Caco-2 (cell line): ENCODE measurements at regions of chr3 and their contacts with region 1.

Region 1: DNA sequence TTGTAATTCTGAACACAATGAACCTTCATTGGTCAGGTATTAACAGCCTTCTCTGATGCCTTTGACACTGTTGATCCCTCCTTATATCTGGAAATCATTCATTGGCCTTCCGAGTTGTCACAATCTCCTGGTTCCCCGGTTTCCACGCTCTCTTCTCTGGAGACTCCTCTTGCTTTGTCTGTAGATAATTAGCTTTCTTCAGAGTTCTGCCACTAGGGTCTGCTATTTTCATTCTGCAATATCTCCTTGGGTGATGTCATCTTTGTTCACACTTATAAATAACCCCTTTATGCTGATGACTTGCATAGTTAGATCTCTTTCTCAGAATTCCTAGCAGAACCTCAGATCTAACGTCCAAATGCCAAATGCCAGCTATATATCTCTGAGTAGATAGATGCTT is 583.8 kb upstream of the ZNF717 start:
- DNase-seq: peak in 1 of 2 experiments; percentile 2
- H3K4me3 ChIP-seq: no peak overlapping the region
- H3K4me3 Mint-ChIP-seq: no peak overlapping the region
- H3K27ac Mint-ChIP-seq: no peak overlapping the region
- H3K4me1 ChIP-seq: no peaks in the 10 kb centered on the region
- H3K4me1 Mint-ChIP-seq: no peaks in the 10 kb centered on the region
- H3K27me3 ChIP-seq: no peaks in the 10 kb centered on the region
- H3K27me3 Mint-ChIP-seq: no peaks in the 10 kb centered on the region
- CTCF ChIP-seq: peak; percentile 26 to 33

Region 2: DNA sequence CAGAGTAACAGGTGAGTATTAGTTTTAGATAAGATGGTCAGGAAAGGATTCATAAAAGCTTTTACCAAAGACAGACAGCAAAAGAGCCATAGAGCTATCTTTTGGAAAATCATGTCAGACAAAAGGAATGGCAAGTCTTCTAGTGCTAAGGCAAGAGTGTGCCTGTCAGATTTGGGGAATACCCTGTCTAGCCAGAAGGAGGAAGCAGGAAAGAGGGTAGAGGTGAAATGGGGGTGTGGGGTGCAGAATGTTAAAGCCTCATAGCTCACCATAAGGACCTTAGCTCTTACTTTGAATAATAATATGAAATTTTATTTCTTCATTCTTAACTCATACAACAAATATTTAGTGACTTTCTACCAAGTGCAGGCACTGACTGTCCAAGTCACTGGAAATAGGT is 158.6 kb after region 1 on chr3:
- CTCF ChIA-PET with region 1: no interaction called
- POLR2A ChIA-PET with region 1: no interaction called
- intact Hi-C with region 1: no loop called
- DNase-seq: no peak
- H3K4me3 ChIP-seq: no peak overlapping the region
- H3K4me3 Mint-ChIP-seq: no peak overlapping the region
- H3K27ac Mint-ChIP-seq: no peak overlapping the region
- H3K4me1 ChIP-seq: no peaks in the 10 kb centered on the region
- H3K4me1 Mint-ChIP-seq: no peaks in the 10 kb centered on the region
- H3K27me3 ChIP-seq: no peaks in the 10 kb centered on the region
- H3K27me3 Mint-ChIP-seq: peaks cover 3% of the 10 kb centered on the region
- CTCF ChIP-seq: no peak

Region 3: DNA sequence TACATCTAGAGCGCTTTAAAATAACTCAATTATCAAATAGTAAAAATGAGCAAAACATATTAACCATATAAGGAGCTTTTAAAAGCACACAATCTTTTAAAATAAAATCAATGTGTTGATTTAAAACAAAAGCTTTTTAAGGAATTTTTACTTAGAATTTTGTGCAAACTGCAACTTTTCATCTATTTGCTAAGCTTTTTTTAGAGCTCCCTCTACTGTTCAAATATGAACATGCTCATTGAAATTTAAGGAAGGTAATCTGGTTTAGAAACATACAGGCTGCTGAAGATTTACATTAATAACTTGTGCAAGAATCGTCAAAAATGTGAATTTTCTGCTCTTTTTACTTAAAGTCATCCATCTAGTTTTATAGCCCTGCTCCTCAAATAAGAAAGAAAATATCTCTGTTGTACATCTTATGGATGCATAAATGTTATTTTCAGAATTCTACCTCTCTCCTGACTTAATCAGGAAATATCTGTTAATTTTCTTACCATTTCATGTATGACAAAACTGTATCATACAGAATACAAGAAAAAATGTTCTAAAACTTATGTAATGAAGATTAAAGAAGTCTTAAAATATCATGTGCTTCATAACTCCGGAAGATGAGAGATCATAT is 201.4 kb after region 1 on chr3:
- CTCF ChIA-PET with region 1: interaction called, 4 read pairs
- POLR2A ChIA-PET with region 1: no interaction called
- intact Hi-C with region 1: loop called (anchors 1 kb)
- DNase-seq: no peak
- H3K4me3 ChIP-seq: no peak overlapping the region
- H3K4me3 Mint-ChIP-seq: no peak overlapping the region
- H3K27ac Mint-ChIP-seq: no peak overlapping the region
- H3K4me1 ChIP-seq: no peaks in the 10 kb centered on the region
- H3K4me1 Mint-ChIP-seq: no peaks in the 10 kb centered on the region
- H3K27me3 ChIP-seq: no peaks in the 10 kb centered on the region
- H3K27me3 Mint-ChIP-seq: no peaks in the 10 kb centered on the region
- CTCF ChIP-seq: peak; percentile 54 to 61